ENCODE measurements at regions of chr9 and their contacts with region 1.

Region 1: GRCh38 chr9:5321058-5321457 is 16.5 kb upstream of the RLN2 start:
- DNase-seq: no peak
- H3K4me3 ChIP-seq: no peak overlapping the region
- H3K27ac ChIP-seq: no peak overlapping the region
- H3K4me1 ChIP-seq: no peaks in the 10 kb centered on the region
- H3K27me3 ChIP-seq: no peaks in the 10 kb centered on the region
- CTCF ChIP-seq: no peak

Region 2: GRCh38 chr9:5364294-5365024 is 43.4 kb after region 1 on chr9:
- intact Hi-C with region 1: loop called (anchors 2 kb)
- DNase-seq: no peak
- H3K4me3 ChIP-seq: no peak overlapping the region
- H3K27ac ChIP-seq: no peak overlapping the region
- H3K4me1 ChIP-seq: peaks cover 0 to 15% (median 3%) of the 10 kb centered on the region in 4 donors
- H3K27me3 ChIP-seq: no peaks in the 10 kb centered on the region
- CTCF ChIP-seq: no peak